ENCODE measurements at regions of chr15 and their contacts with region 1.

Region 1: DNA sequence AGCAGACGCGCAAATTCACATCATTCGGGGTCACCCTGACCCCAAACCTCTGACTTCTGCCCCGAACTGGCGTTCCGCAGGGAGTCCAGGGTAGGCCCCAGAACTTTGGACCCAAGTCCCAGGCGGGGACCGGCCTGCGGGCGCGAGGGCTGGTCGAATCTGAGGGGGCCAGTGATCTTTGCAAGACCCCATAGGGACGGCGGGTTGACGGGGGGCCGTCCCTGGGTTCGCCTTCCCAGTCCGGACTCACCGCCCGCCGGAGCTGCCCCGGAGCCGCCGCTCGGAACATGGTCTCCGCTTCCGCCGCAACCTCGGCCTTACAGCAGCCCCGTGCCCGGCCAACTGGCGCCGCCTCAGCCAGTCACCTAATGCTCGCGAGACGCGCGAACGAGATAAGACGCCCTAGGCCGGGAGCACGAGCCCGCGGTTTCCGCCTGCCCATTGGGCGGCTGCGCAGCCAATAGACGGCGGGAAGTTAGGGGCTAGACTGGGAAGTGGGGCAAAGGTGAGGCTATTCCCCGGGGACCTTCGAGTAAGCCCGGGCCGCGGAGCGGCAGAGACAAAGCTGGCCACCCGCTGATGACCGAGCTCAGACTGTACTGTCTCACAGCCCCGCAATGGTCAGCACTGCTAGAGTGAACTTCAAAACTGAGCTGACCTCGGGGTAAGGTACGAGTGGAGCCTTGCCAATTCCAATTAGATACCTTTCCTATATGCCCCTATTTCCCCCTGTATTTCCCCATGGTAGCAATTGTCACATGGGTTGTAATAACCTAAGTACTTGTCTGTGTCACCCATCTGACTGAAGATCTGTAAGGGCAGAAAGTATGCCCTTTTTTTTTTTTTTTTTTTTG is at the start of gene ETFA:
- DNase-seq: peak; percentile 98
- H3K4me3 Mint-ChIP-seq: peak within 1 kb of the TSS; percentile 76
- H3K27ac Mint-ChIP-seq: peak within 1 kb of the TSS; percentile 3
- H3K4me1 Mint-ChIP-seq: peaks cover 24% of the 10 kb centered on the region
- H3K27me3 Mint-ChIP-seq: no peaks in the 10 kb centered on the region
- CTCF ChIP-seq: no peak
- total RNA-seq, gene ETFA: 133 and 164 TPM in 2 replicates

Region 2: GRCh38 chr15:76324066-76324465 is 12.7 kb after region 1 on chr15:
- CTCF ChIA-PET with region 1: interaction called, 5 read pairs
- POLR2A ChIA-PET with region 1: interaction called, 11 read pairs
- intact Hi-C with region 1: no loop called
- DNase-seq: no peak
- H3K4me3 Mint-ChIP-seq: no peak overlapping the region
- H3K27ac Mint-ChIP-seq: no peak overlapping the region
- H3K4me1 Mint-ChIP-seq: no peaks in the 10 kb centered on the region
- H3K27me3 Mint-ChIP-seq: no peaks in the 10 kb centered on the region
- CTCF ChIP-seq: no peak

Region 3: DNA sequence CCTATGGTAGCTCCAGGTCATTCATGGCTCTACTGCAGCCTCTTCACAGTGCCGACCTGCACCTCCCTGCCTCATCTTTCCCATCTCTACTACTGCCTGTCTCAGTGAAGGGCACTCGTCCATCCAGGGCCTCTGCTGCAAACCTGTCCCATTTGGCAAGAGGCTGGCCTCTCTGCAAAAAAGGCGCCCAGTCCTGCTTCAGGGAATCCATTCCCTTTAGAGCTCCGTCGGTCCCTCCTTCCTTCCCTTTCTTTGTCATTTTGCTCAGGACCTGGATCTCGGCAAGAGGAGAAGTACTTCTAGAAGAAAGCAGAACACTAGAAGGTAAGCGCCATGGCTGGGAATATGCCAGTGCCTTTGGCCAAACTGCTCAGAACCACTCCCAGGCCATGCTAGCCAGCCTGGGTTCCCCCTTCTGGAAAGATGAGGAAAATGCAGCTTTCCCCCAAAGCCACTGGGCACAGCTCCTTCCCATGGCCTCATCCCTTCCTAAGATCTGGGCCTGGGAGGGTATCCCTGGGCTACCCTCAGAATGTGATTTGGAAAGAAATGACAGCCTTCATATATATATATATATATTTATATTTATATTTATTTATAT is 18.9 kb after region 1 on chr15:
- CTCF ChIA-PET with region 1: interaction called, 5 read pairs
- POLR2A ChIA-PET with region 1: interaction called, 11 read pairs
- intact Hi-C with region 1: loop called (anchors 2 kb)
- DNase-seq: peak; percentile 72
- H3K4me3 Mint-ChIP-seq: no peak overlapping the region
- H3K27ac Mint-ChIP-seq: no peak overlapping the region
- H3K4me1 Mint-ChIP-seq: no peaks in the 10 kb centered on the region
- H3K27me3 Mint-ChIP-seq: no peaks in the 10 kb centered on the region
- CTCF ChIP-seq: peak; percentile 44

Measured in MCF 10A (cell line).